ENCODE measurements at regions of chr7 and their contacts with region 1.

Region 1: DNA sequence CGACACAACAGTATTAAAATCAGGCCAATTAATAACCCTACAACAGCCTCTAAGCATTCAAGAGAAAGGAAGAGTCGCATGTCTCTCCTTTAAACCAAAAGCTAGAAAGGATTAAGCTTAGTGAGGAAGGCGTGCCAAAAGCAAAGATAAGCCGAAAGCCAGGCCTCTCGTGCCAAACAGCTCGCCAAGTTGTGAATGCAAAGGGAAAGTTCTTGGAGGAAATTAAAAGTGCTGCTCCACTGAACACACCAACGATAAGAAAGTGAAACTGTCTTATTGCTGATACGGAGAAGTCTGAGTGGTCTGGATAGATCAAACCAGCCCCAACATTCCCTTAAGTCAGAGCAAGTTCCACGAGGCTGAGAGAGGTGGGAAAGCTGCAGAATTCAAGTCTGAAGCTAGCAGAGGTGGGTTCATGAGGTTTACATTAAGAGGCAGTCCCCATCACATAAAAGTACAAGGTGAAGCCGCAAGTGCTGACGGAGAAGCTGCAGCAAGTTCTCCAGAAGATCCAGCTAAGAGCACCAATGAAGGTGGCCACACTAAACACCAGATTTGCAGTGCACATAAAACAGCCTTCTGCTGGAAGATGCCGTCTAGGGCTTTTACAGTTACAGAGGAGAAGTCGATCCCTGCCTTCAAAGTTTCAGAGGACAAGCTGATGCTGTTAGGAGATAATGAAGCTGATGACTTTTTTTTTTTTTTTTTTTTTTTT is 194.8 kb downstream of the MAD1L1 start:
- DNase-seq: no peak
- H3K4me3 Mint-ChIP-seq: peak overlapping the region; percentile 83
- H3K27ac Mint-ChIP-seq: peak overlapping the region; percentile 24
- H3K4me1 Mint-ChIP-seq: peaks cover 42% of the 10 kb centered on the region
- H3K27me3 Mint-ChIP-seq: no peaks in the 10 kb centered on the region

Region 2: DNA sequence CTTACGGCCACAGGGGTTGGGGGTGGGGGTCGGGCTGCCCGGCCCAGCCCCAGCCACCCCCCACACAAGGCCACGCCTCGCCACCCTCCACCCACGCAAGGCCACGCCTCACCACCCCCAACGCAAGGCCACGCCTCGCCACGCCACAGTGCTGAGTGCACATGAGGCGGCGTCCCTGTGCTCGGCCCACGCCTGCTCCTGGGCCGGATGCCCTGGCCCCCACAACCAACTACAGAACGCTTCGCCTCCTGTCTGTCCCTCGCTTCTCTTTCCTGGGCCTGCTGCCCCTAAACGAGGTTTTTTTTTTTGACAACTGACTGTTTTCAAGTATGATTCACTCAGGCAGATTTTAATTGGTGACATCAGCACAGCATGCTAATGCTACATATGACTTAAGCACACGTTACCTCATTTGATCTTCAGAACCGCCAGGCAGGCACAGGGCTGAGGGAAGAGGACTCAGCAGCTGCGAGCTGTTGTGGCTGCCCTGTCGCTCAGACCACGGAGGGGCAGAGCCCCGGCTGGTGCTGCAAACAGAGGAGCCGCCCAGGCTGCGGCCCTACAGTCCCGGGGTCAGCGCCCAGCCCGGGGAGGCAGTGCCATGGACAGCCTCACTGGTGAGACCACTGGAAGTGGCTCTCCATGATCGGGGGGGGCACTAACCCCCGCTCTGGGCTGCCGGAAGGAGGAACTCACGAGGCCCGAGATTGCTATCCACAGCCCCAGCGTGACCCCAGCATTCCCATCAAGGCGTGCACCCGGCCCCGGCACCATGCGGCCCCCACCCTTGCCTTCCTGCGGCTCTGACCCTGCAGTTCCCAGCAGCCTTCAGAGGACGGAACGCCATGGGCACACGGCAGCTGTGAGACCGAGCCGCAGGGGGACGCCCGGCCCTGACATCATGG is 18.1 kb before region 1 on chr7:
- intact Hi-C with region 1: loop called (anchors 2 kb)
- DNase-seq: no peak
- H3K4me3 Mint-ChIP-seq: no peak overlapping the region
- H3K27ac Mint-ChIP-seq: no peak overlapping the region
- H3K4me1 Mint-ChIP-seq: peaks cover 4% of the 10 kb centered on the region
- H3K27me3 Mint-ChIP-seq: peaks cover 2% of the 10 kb centered on the region

Measured in activated T-helper 1 cell treated with anti-CD3 and anti-CD28 coated beads, Interleukin-12 subunit alpha, Interleukin-12 subunit beta, Interleukin-2, Interleukin-4 antibody, amounts not matched to agents 30 ng/mL and 10 ng/mL and 1 ng/mL, durations not matched to agents 14 hours and 24 hours and 36 hours (primary cell).